Activated CD4-positive, alpha-beta T cell treated with anti-CD3 and anti-CD28 coated beads for 36 hours (primary cell): ENCODE measurements at regions of chr7 and their contacts with region 1.

Region 1: GRCh38 chr7:110442381-110442837 is 648.5 kb upstream of the LRRN3 start:
- DNase-seq: peak; percentile 49
- ATAC-seq: no peak
- H3K4me3 Mint-ChIP-seq: no peak overlapping the region
- H3K27ac Mint-ChIP-seq: no peak overlapping the region
- H3K4me1 Mint-ChIP-seq: no peaks in the 10 kb centered on the region
- H3K27me3 Mint-ChIP-seq: no peaks in the 10 kb centered on the region

Region 2: GRCh38 chr7:108613112-108613759 is 1829.2 kb before region 1 on chr7:
- CTCF ChIA-PET with region 1: no interaction called
- POLR2A ChIA-PET with region 1: no interaction called
- intact Hi-C with region 1: loop called in 1 of 2 experiments (anchors 5 kb)
- DNase-seq: no peak
- ATAC-seq: no peak
- H3K4me3 Mint-ChIP-seq: no peak overlapping the region
- H3K27ac Mint-ChIP-seq: no peak overlapping the region
- H3K4me1 Mint-ChIP-seq: no peaks in the 10 kb centered on the region
- H3K27me3 Mint-ChIP-seq: no peaks in the 10 kb centered on the region

Region 3: GRCh38 chr7:109844362-109844761 is 598.0 kb before region 1 on chr7:
- CTCF ChIA-PET with region 1: no interaction called
- POLR2A ChIA-PET with region 1: no interaction called
- intact Hi-C with region 1: loop called in 1 of 2 experiments (anchors 10 kb)
- DNase-seq: no peak
- ATAC-seq: no peak
- H3K4me3 Mint-ChIP-seq: no peak overlapping the region
- H3K27ac Mint-ChIP-seq: no peak overlapping the region
- H3K4me1 Mint-ChIP-seq: no peaks in the 10 kb centered on the region
- H3K27me3 Mint-ChIP-seq: no peaks in the 10 kb centered on the region